CD4-positive, alpha-beta memory T cell (primary cell): ENCODE measurements at regions of chr2 and their contacts with region 1.

Region 1: GRCh38 chr2:160210599-160211138 is 10.6 kb upstream of the ITGB6 start:
- DNase-seq: peak; percentile 41 to 61 (median 55)
- H3K4me3 ChIP-seq: no peak overlapping the region
- H3K4me3 Mint-ChIP-seq: no peak overlapping the region
- H3K27ac ChIP-seq: no peak overlapping the region
- H3K27ac Mint-ChIP-seq: peak overlapping the region in 1 of 7 donors; percentile 71
- H3K4me1 ChIP-seq: no peaks in the 10 kb centered on the region
- H3K4me1 Mint-ChIP-seq: peaks cover 7 to 15% (median 13%) of the 10 kb centered on the region in 4 donors
- H3K27me3 ChIP-seq: no peaks in the 10 kb centered on the region
- H3K27me3 Mint-ChIP-seq: peaks cover 4 to 10% of the 10 kb centered on the region in 2 donors

Region 2: DNA sequence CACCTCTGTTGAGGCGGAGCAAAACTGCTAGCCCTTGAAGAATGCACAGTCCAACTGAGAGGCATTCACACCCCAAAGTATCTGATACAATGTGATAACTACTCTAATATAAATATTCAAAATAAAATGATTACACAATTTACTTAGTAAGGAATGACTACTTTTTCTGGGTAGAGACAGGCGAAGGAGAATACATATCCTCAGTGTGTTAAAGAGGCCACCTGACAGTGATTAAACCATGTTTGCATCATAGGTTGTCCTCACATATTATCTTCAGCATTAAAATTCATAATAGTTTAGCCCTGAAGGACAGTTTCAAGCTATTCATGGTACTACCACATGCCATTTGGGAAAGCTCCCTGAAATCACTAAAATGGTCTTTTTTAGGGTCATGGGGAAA is 577.5 kb before region 1 on chr2:
- CTCF ChIA-PET with region 1: no interaction called
- POLR2A ChIA-PET with region 1: no interaction called
- intact Hi-C with region 1: no loop called
- DNase-seq: no peak
- H3K4me3 ChIP-seq: no peak overlapping the region
- H3K4me3 Mint-ChIP-seq: no peak overlapping the region
- H3K27ac ChIP-seq: no peak overlapping the region
- H3K27ac Mint-ChIP-seq: no peak overlapping the region
- H3K4me1 ChIP-seq: no peaks in the 10 kb centered on the region
- H3K4me1 Mint-ChIP-seq: no peaks in the 10 kb centered on the region
- H3K27me3 ChIP-seq: no peaks in the 10 kb centered on the region
- H3K27me3 Mint-ChIP-seq: no peaks in the 10 kb centered on the region

Region 3: DNA sequence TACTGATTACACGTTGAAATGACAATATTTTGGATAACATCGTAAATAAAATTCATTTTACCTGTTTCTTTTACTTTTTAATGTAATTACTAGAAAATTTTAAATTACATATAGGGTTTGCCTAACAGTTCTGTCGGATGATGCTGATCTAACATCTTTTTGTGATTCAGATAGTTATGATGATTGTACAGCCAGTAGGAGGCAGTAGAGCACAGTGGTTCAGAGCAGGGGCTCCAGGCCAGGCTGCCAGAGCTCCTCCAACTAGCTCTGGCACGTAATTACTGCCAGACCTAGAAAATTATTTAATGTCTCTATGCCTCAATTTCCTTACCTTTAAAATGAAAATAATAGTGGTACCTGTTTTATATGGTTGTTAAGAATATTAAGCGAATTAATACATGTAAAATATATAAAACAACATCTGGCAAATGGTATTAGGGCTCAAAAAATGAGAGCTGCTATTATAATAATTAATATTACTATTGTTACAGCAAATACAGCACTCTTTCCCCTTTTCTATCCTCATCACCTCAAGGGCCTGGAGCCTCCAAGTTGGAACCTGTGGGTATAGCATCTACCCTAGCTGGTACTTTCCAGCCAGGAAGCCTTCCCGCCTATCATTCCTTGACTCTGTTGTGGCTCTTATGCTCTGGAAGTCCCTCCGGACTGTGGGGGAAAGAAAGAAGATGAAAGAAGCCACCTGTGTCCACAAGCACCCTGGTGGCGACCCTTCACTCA is 100.6 kb before region 1 on chr2:
- CTCF ChIA-PET with region 1: interaction called, 64 read pairs
- POLR2A ChIA-PET with region 1: interaction called, 4 read pairs
- intact Hi-C with region 1: no loop called
- DNase-seq: peak; percentile 49 to 60 (median 55)
- H3K4me3 ChIP-seq: no peak overlapping the region
- H3K4me3 Mint-ChIP-seq: no peak overlapping the region
- H3K27ac ChIP-seq: no peak overlapping the region
- H3K27ac Mint-ChIP-seq: no peak overlapping the region
- H3K4me1 ChIP-seq: no peaks in the 10 kb centered on the region
- H3K4me1 Mint-ChIP-seq: no peaks in the 10 kb centered on the region
- H3K27me3 ChIP-seq: no peaks in the 10 kb centered on the region
- H3K27me3 Mint-ChIP-seq: peaks cover 11 to 16% of the 10 kb centered on the region in 2 donors

Region 4: DNA sequence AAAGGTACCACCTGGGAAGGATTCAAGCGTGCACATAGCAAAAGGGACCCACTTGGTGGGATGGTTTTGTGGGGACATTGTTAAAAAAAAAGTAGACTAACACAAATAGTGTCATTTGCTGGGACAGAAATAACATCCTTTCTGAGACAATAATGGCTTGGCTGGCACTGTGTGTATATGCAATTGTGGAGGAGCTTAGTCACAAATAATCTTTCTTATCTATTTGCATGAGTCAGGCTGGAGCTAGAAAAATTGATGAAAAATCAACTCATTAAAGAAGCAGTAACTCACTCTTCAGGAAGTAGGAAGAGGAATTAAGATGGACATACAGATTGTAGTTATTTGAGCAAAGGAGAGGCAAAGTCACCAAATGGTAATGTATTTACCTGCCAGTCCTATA is 18.9 kb after region 1 on chr2:
- CTCF ChIA-PET with region 1: interaction called, 12 read pairs
- POLR2A ChIA-PET with region 1: no interaction called
- intact Hi-C with region 1: no loop called
- DNase-seq: no peak
- H3K4me3 ChIP-seq: no peak overlapping the region
- H3K4me3 Mint-ChIP-seq: no peak overlapping the region
- H3K27ac ChIP-seq: no peak overlapping the region
- H3K27ac Mint-ChIP-seq: peak overlapping the region in 1 of 7 donors; percentile 36
- H3K4me1 ChIP-seq: peaks cover under 1% of the 10 kb centered on the region
- H3K4me1 Mint-ChIP-seq: peaks cover 3 to 7% (median 5%) of the 10 kb centered on the region in 4 donors
- H3K27me3 ChIP-seq: no peaks in the 10 kb centered on the region
- H3K27me3 Mint-ChIP-seq: peaks cover 0 to 4% of the 10 kb centered on the region in 2 donors

Region 5: DNA sequence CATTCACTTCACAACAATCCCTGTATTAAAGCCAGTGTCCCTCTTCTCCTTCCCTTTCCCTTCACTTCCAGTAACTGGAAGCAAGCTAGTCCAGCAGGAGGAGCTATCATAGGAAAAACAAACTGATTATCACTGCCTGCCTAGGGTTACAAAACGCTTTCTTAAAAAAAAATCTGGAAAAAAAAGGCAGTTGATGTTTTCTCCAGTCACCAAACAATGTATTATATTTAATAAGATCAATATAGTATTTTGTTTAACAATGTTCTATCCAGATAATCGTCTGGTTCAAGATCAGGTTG is 68.2 kb after region 1 on chr2:
- CTCF ChIA-PET with region 1: no interaction called
- POLR2A ChIA-PET with region 1: no interaction called
- intact Hi-C with region 1: no loop called
- DNase-seq: no peak
- H3K4me3 ChIP-seq: no peak overlapping the region
- H3K4me3 Mint-ChIP-seq: no peak overlapping the region
- H3K27ac ChIP-seq: no peak overlapping the region
- H3K27ac Mint-ChIP-seq: peak overlapping the region in 5 of 7 donors; percentile 19 to 77 (median 62)
- H3K4me1 ChIP-seq: peaks cover 14% of the 10 kb centered on the region
- H3K4me1 Mint-ChIP-seq: peaks cover 15 to 49% (median 27%) of the 10 kb centered on the region in 4 donors
- H3K27me3 ChIP-seq: no peaks in the 10 kb centered on the region
- H3K27me3 Mint-ChIP-seq: no peaks in the 10 kb centered on the region